IMR-90 (cell line): ENCODE measurements at regions of chr1 and their contacts with region 1.

Region 1: GRCh38 chr1:153842006-153842471 is 66.8 kb downstream of the SLC27A3 start:
- DNase-seq: peak; percentile 12
- ATAC-seq: no peak
- H3K4me3 ChIP-seq: no peak overlapping the region
- H3K27ac ChIP-seq: no peak overlapping the region; the same call in 1 of the 2 replicates
- H3K4me1 ChIP-seq: no peaks in the 10 kb centered on the region
- H3K27me3 ChIP-seq: no peaks in the 10 kb centered on the region
- CTCF ChIP-seq: no peak
- POLR2A ChIP-seq: no peak
- RAD21 ChIP-seq: no peak

Region 2: GRCh38 chr1:153827168-153827964 is 14.7 kb before region 1 on chr1:
- CTCF ChIA-PET with region 1: interaction called, 3 read pairs
- POLR2A ChIA-PET with region 1: no interaction called
- dilution Hi-C with region 1: no loop called
- in situ Hi-C with region 1: no loop called
- intact Hi-C with region 1: loop called (anchors 2 kb)
- DNase-seq: no peak
- ATAC-seq: no peak
- H3K4me3 ChIP-seq: no peak overlapping the region
- H3K27ac ChIP-seq: no peak overlapping the region
- H3K4me1 ChIP-seq: no peaks in the 10 kb centered on the region
- H3K27me3 ChIP-seq: no peaks in the 10 kb centered on the region
- CTCF ChIP-seq: no peak
- POLR2A ChIP-seq: no peak
- RAD21 ChIP-seq: no peak

Region 3: DNA sequence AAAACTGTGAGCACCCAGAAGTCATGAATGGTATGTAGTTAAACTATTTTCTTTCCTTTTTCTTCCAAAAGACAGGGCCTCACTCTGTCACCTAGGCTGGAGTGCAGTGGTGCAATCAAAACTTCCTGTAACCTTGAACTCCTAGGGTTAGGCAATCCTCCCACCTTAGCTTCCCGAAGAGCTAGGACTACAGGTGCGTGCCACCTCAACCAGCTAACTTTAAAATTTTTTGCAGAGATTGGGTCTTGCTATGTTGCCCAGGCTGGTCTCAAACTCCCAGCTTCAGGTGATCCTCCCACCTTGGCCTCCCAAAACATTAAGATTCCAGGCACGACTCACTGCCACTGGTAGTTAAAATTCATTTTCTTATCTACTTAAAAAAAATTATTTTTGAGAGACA is 18.2 kb after region 1 on chr1:
- CTCF ChIA-PET with region 1: no interaction called
- POLR2A ChIA-PET with region 1: interaction called, 18 read pairs
- dilution Hi-C with region 1: no loop called
- in situ Hi-C with region 1: no loop called
- intact Hi-C with region 1: no loop called
- DNase-seq: no peak
- ATAC-seq: no peak
- H3K4me3 ChIP-seq: no peak overlapping the region
- H3K27ac ChIP-seq: no peak overlapping the region
- H3K4me1 ChIP-seq: no peaks in the 10 kb centered on the region
- H3K27me3 ChIP-seq: no peaks in the 10 kb centered on the region
- CTCF ChIP-seq: no peak
- POLR2A ChIP-seq: no peak
- RAD21 ChIP-seq: no peak

Region 4: GRCh38 chr1:154335025-154335714 is 493.1 kb after region 1 on chr1:
- CTCF ChIA-PET with region 1: no interaction called
- POLR2A ChIA-PET with region 1: no interaction called
- dilution Hi-C with region 1: no loop called
- in situ Hi-C with region 1: no loop called
- intact Hi-C with region 1: no loop called
- DNase-seq: peak; percentile 82
- ATAC-seq: peak; percentile 83
- H3K4me3 ChIP-seq: no peak overlapping the region
- H3K27ac ChIP-seq: peak overlapping the region; percentile 86
- H3K4me1 ChIP-seq: peaks cover 10% of the 10 kb centered on the region
- H3K27me3 ChIP-seq: no peaks in the 10 kb centered on the region
- CTCF ChIP-seq: peak; percentile 86
- POLR2A ChIP-seq: no peak
- RAD21 ChIP-seq: peak; percentile 76